Dorsolateral prefrontal cortex (tissue), 120 donors: ENCODE measurements at regions of chr19 and their contacts with region 1.

Region 1: GRCh38 chr19:46487802-46488445 is 7.7 kb downstream of the PNMA8B start:
- DNase-seq: peak; percentile 71 to 90 (median 82)
- H3K4me3 ChIP-seq: peak overlapping the region; percentile 42 to 78 (median 62)
- H3K27ac ChIP-seq: peak overlapping the region in 42 of 59 donors; percentile 6 to 86 (median 60)
- H3K27me3 ChIP-seq: peaks cover 0 to 3% (median 0%) of the 10 kb centered on the region in 45 donors
- CTCF ChIP-seq: peak; percentile 74 to 99 (median 96)

Region 2: DNA sequence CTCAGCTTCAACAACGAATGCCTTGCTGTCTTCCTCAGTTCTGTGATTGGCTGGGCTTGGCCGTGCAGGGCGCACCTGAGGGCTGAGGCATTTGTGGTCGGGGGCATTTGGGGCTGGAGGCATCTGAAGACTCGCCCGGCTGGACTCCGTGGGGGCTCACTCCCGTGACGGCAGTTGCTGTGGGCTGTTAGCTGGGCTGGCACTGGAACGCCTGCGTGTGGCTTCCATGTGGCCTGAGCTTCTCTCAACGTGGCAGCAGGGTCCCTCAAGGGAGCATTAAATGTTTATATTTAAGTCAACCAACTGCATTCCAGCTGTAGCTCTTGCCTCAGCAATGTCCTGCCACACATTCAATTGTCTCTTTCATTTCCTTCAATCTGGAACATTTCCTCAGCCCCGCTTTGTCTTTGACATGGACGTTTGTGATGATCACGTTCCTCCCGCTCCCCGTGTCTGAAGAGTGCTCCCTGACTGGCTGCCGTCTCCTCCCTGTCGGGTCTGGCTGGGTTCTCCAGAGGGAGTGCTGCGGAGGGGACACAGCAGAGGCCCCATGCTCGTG is 95.6 kb before region 1 on chr19:
- intact Hi-C with region 1: loop called (anchors 1 to 2 kb)
- DNase-seq: peak in 2 of 10 donors; percentile 43 to 47
- H3K4me3 ChIP-seq: peak overlapping the region in 1 of 59 donors; percentile 3
- H3K27ac ChIP-seq: peak overlapping the region in 50 of 59 donors; percentile 6 to 82 (median 51)
- H3K27me3 ChIP-seq: no peaks in the 10 kb centered on the region
- CTCF ChIP-seq: no peak

Region 3: DNA sequence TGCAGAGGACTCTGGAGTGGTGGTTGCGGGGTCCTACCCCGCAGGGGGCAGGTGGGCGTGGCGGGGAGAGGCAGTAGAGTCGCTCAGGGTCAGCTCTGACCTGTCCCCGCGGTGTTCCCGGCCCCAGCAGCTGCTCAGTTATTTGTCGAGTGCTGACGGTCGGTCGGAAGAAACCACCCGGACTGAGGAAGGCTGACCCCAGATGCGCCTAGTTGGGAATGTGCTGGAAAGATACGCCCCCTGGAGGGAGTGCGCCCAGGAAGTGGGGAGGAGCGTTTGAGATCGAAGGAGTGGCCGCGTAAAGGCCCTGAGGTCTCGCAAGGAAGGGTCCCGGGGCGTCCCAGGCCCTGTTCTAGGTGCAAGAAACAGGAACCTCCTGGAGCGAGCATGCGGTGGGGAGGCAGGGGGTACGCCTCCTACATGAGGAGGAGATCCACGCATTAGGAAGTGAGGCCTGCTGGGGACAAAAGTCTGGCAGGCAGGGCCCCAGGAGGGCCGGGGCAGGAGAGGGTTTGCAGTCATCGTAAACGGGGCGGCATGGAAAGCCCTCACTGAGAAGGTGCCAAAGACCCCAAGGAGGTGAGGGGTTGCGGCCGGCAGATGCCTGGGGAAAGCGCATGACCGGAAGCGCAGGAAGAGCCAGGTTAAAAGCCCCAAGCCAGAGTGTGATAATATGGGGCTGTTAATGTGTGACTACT is 83.7 kb before region 1 on chr19:
- intact Hi-C with region 1: loop called (anchors 1 to 2 kb)
- DNase-seq: peak in 1 of 10 donors; percentile 35
- H3K4me3 ChIP-seq: peak overlapping the region in 55 of 59 donors; percentile 10 to 65 (median 43)
- H3K27ac ChIP-seq: peak overlapping the region in 11 of 59 donors; percentile 0 to 58 (median 38)
- H3K27me3 ChIP-seq: peaks cover 0 to 8% (median 0%) of the 10 kb centered on the region in 45 donors
- CTCF ChIP-seq: peak in 21 of 56 donors; percentile 6 to 46 (median 27)